Activated CD4-positive, alpha-beta memory T cell treated with anti-CD3 and anti-CD28 coated beads for 36 hours (primary cell): ENCODE measurements at regions of chr13 and their contacts with region 1.

Region 1: DNA sequence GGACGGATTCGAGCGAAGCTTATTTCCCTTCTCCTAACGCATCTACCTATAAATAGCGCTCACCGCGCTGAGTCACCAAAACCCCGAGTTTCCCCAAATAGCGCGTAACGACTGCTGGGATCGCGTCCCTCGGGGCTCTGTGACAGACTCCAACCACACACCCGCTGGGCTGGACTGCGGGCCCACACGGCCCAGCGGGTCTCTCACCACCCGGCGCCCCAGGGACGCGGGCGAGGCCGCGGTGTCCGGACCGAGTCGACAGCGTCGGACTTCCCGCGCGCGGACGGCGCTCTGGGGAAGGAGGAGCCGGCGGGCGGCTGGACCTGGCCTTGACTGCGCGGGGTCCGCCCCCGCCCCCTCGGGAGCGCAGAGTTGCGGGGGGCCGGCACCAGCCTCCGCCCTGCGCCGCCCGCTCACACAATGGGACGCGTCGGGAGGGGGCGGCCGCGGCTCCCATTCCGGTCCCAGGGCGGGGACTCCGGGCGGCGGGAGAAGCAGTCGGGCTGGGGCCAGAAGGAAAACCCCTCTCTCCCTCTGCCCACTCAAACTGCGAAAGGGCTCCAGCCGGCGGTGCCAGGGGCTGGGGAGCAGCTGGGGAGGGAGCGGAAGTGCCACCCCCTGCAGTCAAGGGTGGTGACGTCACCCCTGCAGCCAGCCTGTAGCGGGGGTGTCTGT is 108.8 kb downstream of the KCNRG start:
- DNase-seq: peak; percentile 88
- H3K4me3 Mint-ChIP-seq: peak overlapping the region; percentile 81
- H3K27ac Mint-ChIP-seq: peak overlapping the region; percentile 90
- H3K4me1 Mint-ChIP-seq: peaks cover 58% of the 10 kb centered on the region
- H3K27me3 Mint-ChIP-seq: peaks cover 16% of the 10 kb centered on the region

Region 2: DNA sequence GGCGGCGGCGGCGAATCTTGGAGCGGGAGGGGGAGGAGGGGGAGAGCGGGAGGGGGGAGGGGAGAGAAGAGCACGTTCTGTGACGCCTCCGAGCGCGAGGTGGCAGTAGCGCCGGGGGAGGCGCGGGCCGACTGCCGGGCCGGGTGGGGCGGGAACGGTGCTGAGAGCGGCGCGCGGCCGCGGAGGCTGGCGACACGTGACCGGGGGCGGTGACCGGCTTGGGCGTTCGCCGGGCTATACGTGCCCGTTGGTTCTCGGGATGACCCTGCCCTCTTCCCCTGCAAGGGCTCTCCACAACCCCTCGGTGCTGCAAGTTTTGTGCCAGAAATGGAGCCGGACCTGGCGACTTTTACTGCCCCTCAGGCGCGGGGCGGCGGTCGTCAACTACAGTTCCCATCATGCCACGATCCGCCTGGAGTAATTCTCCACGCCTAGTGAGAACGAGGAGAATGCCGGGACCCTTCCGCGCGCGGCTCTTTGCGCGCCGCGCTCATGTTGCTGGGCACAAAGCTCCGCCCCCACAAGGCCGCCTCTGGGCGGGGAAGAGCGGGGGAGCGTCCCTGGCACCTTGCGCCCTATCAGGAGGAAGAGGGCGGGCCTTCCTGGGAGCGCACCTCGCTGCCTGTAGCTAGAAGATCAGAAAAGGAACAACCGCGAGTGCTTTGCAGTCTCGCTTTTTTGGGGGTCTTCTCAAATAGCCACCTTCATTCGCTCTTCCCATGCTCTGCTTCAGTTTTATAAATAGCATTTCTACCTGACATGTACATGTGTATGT is 331.3 kb before region 1 on chr13 and contains the start of gene KPNA3:
- CTCF ChIA-PET with region 1: no interaction called
- POLR2A ChIA-PET with region 1: interaction called, 4 read pairs
- intact Hi-C with region 1: loop called (anchors 2 kb)
- DNase-seq: peak; percentile 96
- H3K4me3 Mint-ChIP-seq: peak within 1 kb of the TSS; percentile 91
- H3K27ac Mint-ChIP-seq: peak within 1 kb of the TSS; percentile 93
- H3K4me1 Mint-ChIP-seq: peaks cover 27% of the 10 kb centered on the region
- H3K27me3 Mint-ChIP-seq: no peaks in the 10 kb centered on the region
- total RNA-seq, gene KPNA3: 42.0 to 44.0 TPM

Region 3: GRCh38 chr13:49936085-49936940 is 187.7 kb before region 1 on chr13 and contains the start of gene SPRYD7:
- CTCF ChIA-PET with region 1: no interaction called
- POLR2A ChIA-PET with region 1: no interaction called
- intact Hi-C with region 1: loop called (anchors 1 kb)
- DNase-seq: peak; percentile 97
- H3K4me3 Mint-ChIP-seq: peak within 1 kb of the TSS; percentile 92
- H3K27ac Mint-ChIP-seq: peak within 1 kb of the TSS; percentile 77
- H3K4me1 Mint-ChIP-seq: peaks cover 12% of the 10 kb centered on the region
- H3K27me3 Mint-ChIP-seq: no peaks in the 10 kb centered on the region
- total RNA-seq, gene SPRYD7: 4.9 to 5.4 TPM

Region 4: GRCh38 chr13:50037788-50038187 is 86.2 kb before region 1 on chr13:
- CTCF ChIA-PET with region 1: no interaction called
- POLR2A ChIA-PET with region 1: no interaction called
- intact Hi-C with region 1: no loop called
- DNase-seq: no peak
- H3K4me3 Mint-ChIP-seq: no peak overlapping the region
- H3K27ac Mint-ChIP-seq: no peak overlapping the region
- H3K4me1 Mint-ChIP-seq: peaks cover 5% of the 10 kb centered on the region
- H3K27me3 Mint-ChIP-seq: no peaks in the 10 kb centered on the region

Region 5: GRCh38 chr13:50106559-50106958 is 17.4 kb before region 1 on chr13:
- CTCF ChIA-PET with region 1: interaction called, 3 read pairs
- POLR2A ChIA-PET with region 1: interaction called, 4 read pairs
- intact Hi-C with region 1: loop called (anchors 2 kb)
- DNase-seq: no peak
- H3K4me3 Mint-ChIP-seq: no peak overlapping the region
- H3K27ac Mint-ChIP-seq: peak overlapping the region; percentile 44
- H3K4me1 Mint-ChIP-seq: peaks cover 31% of the 10 kb centered on the region
- H3K27me3 Mint-ChIP-seq: no peaks in the 10 kb centered on the region

Region 6: DNA sequence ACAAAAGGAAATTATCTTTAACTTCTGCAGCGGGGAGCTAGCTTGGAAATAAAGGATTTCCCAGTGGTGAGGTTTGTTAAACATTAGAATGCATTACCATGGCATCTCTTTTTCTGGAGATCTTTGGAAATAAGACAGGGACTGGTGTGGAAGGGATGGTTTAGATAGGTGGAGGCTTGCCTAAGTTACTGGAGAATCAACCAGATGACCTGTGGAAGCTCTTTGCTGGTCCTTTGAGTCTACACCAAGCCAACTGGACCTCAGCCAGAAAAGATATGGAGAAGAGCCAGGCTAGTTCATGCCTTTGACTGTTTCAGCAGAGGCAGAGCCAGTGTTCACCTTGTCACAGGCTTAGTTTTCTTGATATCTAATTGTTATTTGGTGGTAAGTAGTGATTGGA is 25.9 kb after region 1 on chr13:
- CTCF ChIA-PET with region 1: no interaction called
- POLR2A ChIA-PET with region 1: no interaction called
- intact Hi-C with region 1: no loop called
- DNase-seq: no peak
- H3K4me3 Mint-ChIP-seq: no peak overlapping the region
- H3K27ac Mint-ChIP-seq: no peak overlapping the region
- H3K4me1 Mint-ChIP-seq: peaks cover 21% of the 10 kb centered on the region
- H3K27me3 Mint-ChIP-seq: peaks cover 3% of the 10 kb centered on the region

Region 7: GRCh38 chr13:50174630-50175029 is 50.6 kb after region 1 on chr13:
- CTCF ChIA-PET with region 1: no interaction called
- POLR2A ChIA-PET with region 1: no interaction called
- intact Hi-C with region 1: no loop called
- DNase-seq: no peak
- H3K4me3 Mint-ChIP-seq: no peak overlapping the region
- H3K27ac Mint-ChIP-seq: no peak overlapping the region
- H3K4me1 Mint-ChIP-seq: no peaks in the 10 kb centered on the region
- H3K27me3 Mint-ChIP-seq: peaks cover 3% of the 10 kb centered on the region

Region 8: GRCh38 chr13:50222569-50223332 is 98.8 kb after region 1 on chr13:
- CTCF ChIA-PET with region 1: interaction called, 5 read pairs
- POLR2A ChIA-PET with region 1: interaction called, 12 read pairs
- intact Hi-C with region 1: no loop called
- DNase-seq: peak; percentile 45
- H3K4me3 Mint-ChIP-seq: peak overlapping the region; percentile 57
- H3K27ac Mint-ChIP-seq: no peak overlapping the region
- H3K4me1 Mint-ChIP-seq: peaks cover 61% of the 10 kb centered on the region
- H3K27me3 Mint-ChIP-seq: peaks cover 47% of the 10 kb centered on the region

Region 9: DNA sequence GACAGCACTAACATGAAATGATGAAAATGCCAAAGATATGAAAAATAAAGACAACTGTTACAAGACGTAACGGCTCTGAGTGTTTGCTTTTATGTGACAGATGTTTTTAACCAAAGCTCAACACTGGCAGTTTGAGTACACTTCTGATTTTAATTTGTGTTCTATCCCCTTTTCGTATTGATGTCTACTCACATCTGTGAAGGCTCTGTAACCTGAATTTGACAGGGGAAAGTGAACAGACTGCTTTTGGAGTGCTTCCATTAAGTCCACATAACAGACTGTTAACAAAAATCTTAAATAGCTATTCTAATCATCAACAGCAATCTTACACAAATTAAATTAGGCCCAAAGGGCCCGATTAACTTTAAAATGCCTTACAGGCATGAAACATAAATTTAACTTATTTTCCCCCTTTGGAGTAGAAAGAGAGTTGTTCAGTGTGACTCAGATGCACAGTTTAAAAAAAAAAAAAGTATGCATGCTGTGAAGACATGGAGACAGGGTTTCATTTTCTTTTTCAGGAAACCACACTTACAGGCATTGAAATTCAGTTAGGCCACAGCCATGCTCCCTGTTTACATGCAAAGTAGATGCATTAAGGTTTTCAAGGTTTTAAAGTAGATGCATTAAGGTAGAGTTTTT is 769.3 kb after region 1 on chr13:
- CTCF ChIA-PET with region 1: no interaction called
- POLR2A ChIA-PET with region 1: no interaction called
- intact Hi-C with region 1: loop called (anchors 2 kb)
- DNase-seq: peak; percentile 16
- H3K4me3 Mint-ChIP-seq: peak overlapping the region; percentile 53
- H3K27ac Mint-ChIP-seq: peak overlapping the region; percentile 84
- H3K4me1 Mint-ChIP-seq: peaks cover 39% of the 10 kb centered on the region
- H3K27me3 Mint-ChIP-seq: no peaks in the 10 kb centered on the region

Region 10: DNA sequence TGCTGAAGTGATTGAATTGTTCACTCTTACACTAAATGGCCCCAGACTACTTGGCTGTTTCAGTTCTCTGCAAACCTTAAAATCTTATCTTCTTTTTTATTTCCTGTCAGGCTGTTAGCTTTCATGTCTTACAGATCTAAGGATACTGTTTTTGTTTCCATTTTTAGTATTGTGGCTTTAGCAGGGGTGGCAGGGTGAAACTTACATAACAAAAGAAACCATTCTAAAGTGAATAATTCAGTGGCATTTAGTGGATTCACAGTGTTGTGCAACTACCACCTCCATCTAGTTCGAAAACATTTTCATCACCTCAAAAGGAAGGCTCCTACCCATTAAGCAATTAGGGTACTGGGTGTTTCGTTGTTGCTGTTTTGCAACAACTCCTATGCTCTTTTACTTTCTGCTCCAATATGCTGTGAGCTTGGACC is 1701.2 kb after region 1 on chr13:
- CTCF ChIA-PET with region 1: no interaction called
- POLR2A ChIA-PET with region 1: no interaction called
- intact Hi-C with region 1: loop called (anchors 10 kb)
- DNase-seq: no peak
- H3K4me3 Mint-ChIP-seq: peak overlapping the region; percentile 52
- H3K27ac Mint-ChIP-seq: peak overlapping the region; percentile 84
- H3K4me1 Mint-ChIP-seq: peaks cover 81% of the 10 kb centered on the region
- H3K27me3 Mint-ChIP-seq: no peaks in the 10 kb centered on the region